ENCODE measurements at regions of chr11 and their contacts with region 1.

Region 1: DNA sequence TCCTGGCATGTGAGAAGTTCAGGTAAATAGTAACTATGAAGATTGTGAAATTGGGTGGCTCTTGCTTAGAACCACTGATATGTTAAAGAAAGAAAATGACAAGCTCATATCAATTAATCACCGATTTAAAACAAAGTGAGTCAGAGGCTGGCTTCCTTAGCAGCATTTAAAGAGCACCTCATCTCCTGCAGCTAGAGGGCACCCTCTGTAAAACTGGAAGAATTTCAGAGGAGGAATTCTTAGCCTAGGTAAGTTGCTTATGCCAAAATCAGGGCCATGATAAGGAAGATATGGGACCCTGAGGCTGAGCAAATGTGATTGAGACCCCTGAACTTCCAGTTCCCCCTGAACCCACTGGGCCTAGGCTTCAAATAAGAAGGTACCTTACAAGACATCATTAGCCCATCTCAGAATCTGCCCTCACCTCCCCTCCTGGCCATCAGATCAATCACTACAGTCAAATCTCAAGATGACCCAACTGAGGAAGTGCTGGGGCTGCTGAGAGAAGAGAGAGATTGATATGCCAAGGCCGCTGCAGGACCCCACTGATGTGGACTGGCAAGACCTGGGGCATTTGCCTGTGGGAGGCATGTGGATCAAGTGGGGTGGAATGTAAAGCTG is 8.6 kb upstream of the CD3E start:
- DNase-seq: no peak

Region 2: GRCh38 chr11:118353084-118353710 is 57.3 kb after region 1 on chr11:
- intact Hi-C with region 1: loop called (anchors 5 kb)
- DNase-seq: no peak